Aorta (tissue), 5 donors: ENCODE measurements at regions of chr11 and their contacts with region 1.

Region 1: DNA sequence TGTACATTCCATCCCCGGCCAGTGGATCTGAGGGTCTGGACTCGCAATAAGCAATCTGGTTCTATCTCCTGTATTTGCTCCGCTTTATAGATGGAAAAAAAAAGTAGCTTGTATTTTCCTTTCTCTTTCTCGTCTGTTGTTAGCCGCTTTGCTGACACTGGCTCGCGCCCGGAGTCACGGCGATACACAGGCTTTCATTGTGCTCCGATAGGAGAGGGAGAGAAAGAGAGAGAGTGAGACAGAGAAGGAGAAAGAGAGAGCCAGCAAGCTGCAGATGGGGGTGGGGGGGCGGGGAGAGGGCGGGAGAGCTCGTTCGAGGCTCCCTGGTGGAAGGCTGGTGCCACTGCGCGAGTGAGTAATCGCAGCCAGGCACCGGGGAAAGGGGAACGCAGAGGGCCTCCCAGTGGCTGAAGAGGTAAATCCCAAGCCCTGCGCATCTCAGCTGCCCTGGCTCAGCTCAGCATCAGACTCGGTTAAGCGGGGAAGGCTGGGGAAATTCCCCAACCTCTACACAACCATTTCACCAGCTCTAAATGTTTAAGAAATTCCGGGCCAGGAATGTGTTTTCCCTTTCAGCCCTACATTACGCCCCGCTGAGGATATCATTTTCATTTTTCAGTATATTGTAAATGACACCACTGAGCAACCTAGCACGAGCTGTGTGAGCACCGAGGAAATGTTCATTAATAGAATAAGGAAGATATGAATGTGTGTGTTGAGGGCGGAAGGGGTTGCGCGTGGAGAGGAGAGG is at the start of gene MAML2:
- DNase-seq: peak; percentile 96
- ATAC-seq: peak; percentile 93
- H3K4me3 ChIP-seq: peak within 1 kb of the TSS; percentile 87 to 100
- H3K27ac ChIP-seq: peak within 1 kb of the TSS in 1 of 2 donors; percentile 89
- H3K4me1 ChIP-seq: peaks cover 0 to 12% of the 10 kb centered on the region in 2 donors
- H3K27me3 ChIP-seq: no peaks in the 10 kb centered on the region
- total RNA-seq, gene MAML2: 18.1 to 27.5 TPM

Region 2: GRCh38 chr11:96001037-96001436 is 342.1 kb before region 1 on chr11:
- intact Hi-C with region 1: loop called in 1 of 2 experiments (anchors 10 kb)
- DNase-seq: peak; percentile 91 to 92
- ATAC-seq: peak; percentile 96
- H3K4me3 ChIP-seq: no peak overlapping the region
- H3K27ac ChIP-seq: peak overlapping the region in 1 of 2 donors; percentile 76
- H3K4me1 ChIP-seq: peaks cover 4% of the 10 kb centered on the region in 2 donors
- H3K27me3 ChIP-seq: peaks cover 0 to 2% of the 10 kb centered on the region in 2 donors

Region 3: DNA sequence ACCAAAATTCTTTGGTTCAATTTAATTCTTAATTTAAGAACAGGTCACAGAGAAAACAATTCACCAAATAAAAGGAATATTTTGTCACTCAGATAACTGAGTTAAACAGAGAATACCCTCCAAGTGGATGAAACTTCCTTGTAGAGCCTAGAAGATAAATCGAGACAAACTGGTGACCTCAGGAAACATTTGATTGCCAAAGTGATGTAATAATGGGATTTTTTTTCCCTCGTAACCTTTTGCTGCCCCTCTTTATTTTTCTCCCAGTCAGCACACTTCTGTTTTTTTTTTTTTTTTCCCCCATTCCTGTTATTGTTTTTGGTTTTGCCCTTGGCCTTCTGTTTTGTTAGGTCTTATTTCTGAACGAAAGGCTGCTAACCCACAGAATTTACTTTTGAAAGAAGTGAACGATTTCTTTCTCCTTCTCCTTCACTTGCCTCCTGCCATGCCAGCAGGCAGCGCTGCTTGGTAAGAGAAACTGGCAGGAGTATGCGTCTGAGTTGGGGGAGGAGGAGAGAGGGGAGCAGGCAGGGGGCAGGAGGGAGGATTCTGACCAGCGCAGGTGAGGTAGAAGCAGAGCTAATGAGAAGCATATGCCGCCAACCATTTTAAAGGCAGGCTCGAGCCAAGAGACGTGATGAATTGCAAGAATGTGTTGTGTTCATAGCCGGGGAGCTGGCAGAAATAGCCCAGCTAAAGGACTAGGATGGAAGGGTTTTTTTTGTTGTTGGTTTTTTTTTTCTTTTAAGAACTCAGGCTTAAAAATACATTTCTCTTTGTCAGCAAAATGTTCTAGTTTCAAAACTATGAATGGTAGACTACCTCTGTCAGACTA is 297.3 kb before region 1 on chr11:
- intact Hi-C with region 1: loop called (anchors 2 to 5 kb)
- DNase-seq: peak; percentile 77 to 85
- ATAC-seq: peak; percentile 85
- H3K4me3 ChIP-seq: peak overlapping the region in 1 of 2 donors; percentile 12
- H3K27ac ChIP-seq: peak overlapping the region; percentile 6 to 96
- H3K4me1 ChIP-seq: peaks cover 0 to 6% of the 10 kb centered on the region in 2 donors
- H3K27me3 ChIP-seq: no peaks in the 10 kb centered on the region

Region 4: DNA sequence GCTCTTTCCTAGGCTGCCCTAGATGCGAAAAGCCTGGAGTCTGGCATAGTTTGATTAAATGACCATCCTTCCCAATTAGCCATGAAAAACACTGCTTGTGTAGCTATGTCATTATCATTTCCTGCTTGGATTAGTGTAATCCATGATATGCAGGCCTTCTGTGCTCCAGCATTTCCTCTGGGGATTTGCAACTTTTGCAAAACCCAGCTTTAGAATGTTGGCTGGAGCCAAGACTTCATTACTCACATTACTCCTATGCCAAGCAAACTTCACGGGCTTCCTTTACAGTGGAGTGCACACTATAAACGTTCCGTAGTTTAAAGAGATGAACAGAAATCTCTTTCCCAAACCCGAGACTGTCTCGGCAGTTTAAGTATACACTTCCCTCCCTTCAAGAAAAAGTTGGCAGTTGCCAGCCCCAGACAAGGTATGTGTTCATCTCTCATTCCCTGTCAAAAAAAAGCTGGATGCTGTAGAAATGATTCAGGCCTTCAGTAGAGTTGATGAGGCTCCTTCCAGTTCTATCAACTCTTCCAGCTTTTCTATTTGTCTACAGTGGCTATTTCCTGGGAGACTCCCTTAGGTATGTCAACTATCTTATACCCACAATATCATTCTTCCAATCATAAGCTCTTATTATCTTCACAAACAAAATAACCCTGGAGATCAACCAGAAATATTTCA is 180.2 kb before region 1 on chr11:
- intact Hi-C with region 1: loop called (anchors 5 kb)
- DNase-seq: no peak
- ATAC-seq: peak; percentile 78
- H3K4me3 ChIP-seq: no peak overlapping the region
- H3K27ac ChIP-seq: peak overlapping the region in 1 of 2 donors; percentile 77
- H3K4me1 ChIP-seq: peaks cover 3 to 4% of the 10 kb centered on the region in 2 donors
- H3K27me3 ChIP-seq: no peaks in the 10 kb centered on the region